ENCODE measurements at regions of chr14 and their contacts with region 1.

Region 1: DNA sequence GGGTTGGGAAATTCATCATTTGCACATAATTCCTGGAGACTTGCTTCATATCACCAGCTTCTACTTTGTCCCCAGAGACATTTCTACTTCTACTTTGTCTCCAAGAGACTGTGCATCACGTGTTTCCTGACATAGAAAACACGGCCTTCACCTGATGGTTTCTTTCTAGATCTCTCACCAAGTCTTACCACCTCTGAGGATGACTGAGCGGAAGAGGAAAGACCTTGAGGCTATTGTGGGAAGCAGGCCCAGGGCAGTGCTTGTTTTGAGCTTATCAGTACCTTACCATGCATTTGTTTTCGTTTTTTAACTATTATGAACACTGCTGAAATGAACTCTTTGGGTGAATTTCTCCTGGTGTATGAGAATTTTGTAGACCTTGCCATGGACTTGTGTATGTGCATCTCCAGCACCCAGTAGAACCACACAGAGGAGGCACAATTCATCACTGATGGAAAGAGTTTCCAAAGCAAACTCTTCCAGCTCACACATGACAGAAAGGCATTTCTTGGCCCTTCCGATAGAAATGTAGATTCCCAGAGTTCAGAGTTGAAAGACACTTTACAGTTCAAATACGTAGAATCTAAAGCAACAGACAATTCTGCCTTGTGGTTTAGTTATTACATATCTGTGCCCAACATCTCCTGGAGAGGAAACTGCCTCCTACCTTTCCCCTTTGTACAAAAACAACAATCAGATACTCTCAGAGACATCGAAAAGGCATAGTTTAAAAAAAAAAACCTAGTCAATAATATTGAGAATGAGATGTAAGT is 434.7 kb downstream of the FUT8 start:
- DNase-seq: peak; percentile 45 to 93 (median 87)
- H3K4me3 ChIP-seq: peak overlapping the region; percentile 51
- H3K4me3 Mint-ChIP-seq: peak overlapping the region; percentile 41 to 85 (median 78)
- H3K27ac ChIP-seq: peak overlapping the region; percentile 28
- H3K27ac Mint-ChIP-seq: peak overlapping the region; percentile 83 to 99 (median 91)
- H3K4me1 ChIP-seq: peaks cover 91% of the 10 kb centered on the region
- H3K4me1 Mint-ChIP-seq: peaks cover 67 to 91% (median 89%) of the 10 kb centered on the region in 3 donors
- H3K27me3 ChIP-seq: no peaks in the 10 kb centered on the region
- H3K27me3 Mint-ChIP-seq: no peaks in the 10 kb centered on the region

Region 2: GRCh38 chr14:65832431-65833266 is 14.6 kb before region 1 on chr14:
- CTCF ChIA-PET with region 1: interaction called, 14 read pairs
- POLR2A ChIA-PET with region 1: interaction called, 5 read pairs
- DNase-seq: no peak
- H3K4me3 ChIP-seq: no peak overlapping the region
- H3K4me3 Mint-ChIP-seq: no peak overlapping the region
- H3K27ac ChIP-seq: no peak overlapping the region
- H3K27ac Mint-ChIP-seq: no peak overlapping the region
- H3K4me1 ChIP-seq: peaks cover 12% of the 10 kb centered on the region
- H3K4me1 Mint-ChIP-seq: peaks cover 30 to 49% (median 36%) of the 10 kb centered on the region in 3 donors
- H3K27me3 ChIP-seq: no peaks in the 10 kb centered on the region
- H3K27me3 Mint-ChIP-seq: peaks cover 0 to 2% of the 10 kb centered on the region in 2 donors

Region 3: GRCh38 chr14:65927931-65928356 is 80.7 kb after region 1 on chr14:
- CTCF ChIA-PET with region 1: interaction called, 10 read pairs
- POLR2A ChIA-PET with region 1: interaction called, 11 read pairs
- DNase-seq: peak; percentile 44 to 84 (median 67)
- H3K4me3 ChIP-seq: peak overlapping the region; percentile 47
- H3K4me3 Mint-ChIP-seq: peak overlapping the region; percentile 18 to 90 (median 70)
- H3K27ac ChIP-seq: peak overlapping the region; percentile 16
- H3K27ac Mint-ChIP-seq: peak overlapping the region; percentile 73 to 98 (median 86)
- H3K4me1 ChIP-seq: peaks cover 53% of the 10 kb centered on the region
- H3K4me1 Mint-ChIP-seq: peaks cover 67 to 82% (median 77%) of the 10 kb centered on the region in 3 donors
- H3K27me3 ChIP-seq: no peaks in the 10 kb centered on the region
- H3K27me3 Mint-ChIP-seq: peaks cover 0 to 1% of the 10 kb centered on the region in 2 donors

Region 4: GRCh38 chr14:65958664-65959562 is 111.7 kb after region 1 on chr14:
- CTCF ChIA-PET with region 1: interaction called, 15 read pairs
- POLR2A ChIA-PET with region 1: no interaction called
- DNase-seq: peak in 2 of 5 donors; percentile 22 to 46
- H3K4me3 ChIP-seq: no peak overlapping the region
- H3K4me3 Mint-ChIP-seq: no peak overlapping the region
- H3K27ac ChIP-seq: no peak overlapping the region
- H3K27ac Mint-ChIP-seq: no peak overlapping the region
- H3K4me1 ChIP-seq: peaks cover 16% of the 10 kb centered on the region
- H3K4me1 Mint-ChIP-seq: peaks cover 25% of the 10 kb centered on the region in 3 donors
- H3K27me3 ChIP-seq: no peaks in the 10 kb centered on the region
- H3K27me3 Mint-ChIP-seq: no peaks in the 10 kb centered on the region